ENCODE measurements at regions of chr9 and their contacts with region 1.

Region 1: GRCh38 chr9:136991993-136992818 is at the start of gene PAXX:
- DNase-seq: peak; percentile 90 to 99 (median 93)
- ATAC-seq: peak; percentile 96
- H3K4me3 ChIP-seq: peak within 1 kb of the TSS; percentile 74
- H3K4me3 Mint-ChIP-seq: peak within 1 kb of the TSS; percentile 76 to 90 (median 86)
- H3K27ac ChIP-seq: peak within 1 kb of the TSS; percentile 81
- H3K27ac Mint-ChIP-seq: peak within 1 kb of the TSS; percentile 48 to 89 (median 88)
- H3K4me1 ChIP-seq: peaks cover 17 to 23% of the 10 kb centered on the region in 2 donors
- H3K4me1 Mint-ChIP-seq: peaks cover 0 to 25% (median 15%) of the 10 kb centered on the region in 7 donors
- H3K27me3 ChIP-seq: no peaks in the 10 kb centered on the region
- H3K27me3 Mint-ChIP-seq: peaks cover 5 to 22% (median 5%) of the 10 kb centered on the region in 5 donors
- total RNA-seq, gene PAXX: 54.8 to 78.2 (median 68.0) TPM

Region 2: DNA sequence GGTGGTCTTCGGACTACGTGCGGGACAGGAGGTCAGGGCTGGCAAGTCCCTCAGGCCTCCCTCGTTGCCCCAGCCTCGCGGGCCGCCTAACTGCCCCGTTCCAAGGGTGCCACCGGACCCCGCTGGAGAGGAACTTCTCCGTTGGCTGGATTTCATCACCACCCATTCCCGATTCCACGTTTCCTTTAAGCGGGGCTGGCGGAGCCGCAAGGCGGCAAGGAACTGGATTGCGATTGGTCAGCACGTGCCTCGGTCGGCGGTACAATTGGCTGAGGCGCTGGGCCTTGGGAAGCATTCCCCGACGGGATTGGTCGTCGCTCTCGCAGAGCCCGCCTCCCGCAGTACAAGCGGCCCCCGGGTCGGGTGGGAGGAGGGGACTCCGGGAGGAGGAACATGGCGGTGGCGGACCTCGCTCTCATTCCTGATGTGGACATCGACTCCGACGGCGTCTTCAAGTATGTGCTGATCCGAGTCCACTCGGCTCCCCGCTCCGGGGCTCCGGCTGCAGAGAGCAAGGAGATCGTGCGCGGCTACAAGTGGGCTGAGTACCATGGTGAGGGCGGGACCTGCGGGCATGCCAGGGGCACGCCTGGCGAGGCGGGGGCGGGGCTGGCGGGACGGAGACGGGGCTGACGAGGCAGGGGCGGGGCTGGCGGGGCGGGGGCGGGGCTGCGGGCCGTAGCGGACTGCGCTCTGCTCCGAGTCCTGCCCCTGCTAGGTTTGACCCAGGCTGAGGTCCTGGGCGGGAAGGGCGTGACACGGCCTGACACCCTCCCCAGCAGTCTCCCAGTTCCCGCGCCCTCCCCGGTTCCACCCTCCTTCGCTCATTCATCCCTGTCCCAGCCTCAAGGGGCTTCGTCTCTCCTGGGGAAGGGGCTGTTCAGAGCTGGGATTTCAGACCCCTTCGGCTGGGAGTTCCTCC is 142.9 kb before region 1 on chr9 and contains the start of gene PHPT1:
- CTCF ChIA-PET with region 1: no interaction called
- POLR2A ChIA-PET with region 1: no interaction called
- intact Hi-C with region 1: loop called (anchors 1 kb)
- DNase-seq: peak; percentile 91 to 98 (median 97)
- ATAC-seq: peak; percentile 96
- H3K4me3 ChIP-seq: peak within 1 kb of the TSS; percentile 99
- H3K4me3 Mint-ChIP-seq: peak within 1 kb of the TSS; percentile 86 to 97 (median 92)
- H3K27ac ChIP-seq: peak within 1 kb of the TSS; percentile 71
- H3K27ac Mint-ChIP-seq: peak within 1 kb of the TSS; percentile 40 to 94 (median 88)
- H3K4me1 ChIP-seq: peaks cover 15 to 17% of the 10 kb centered on the region in 2 donors
- H3K4me1 Mint-ChIP-seq: peaks cover 0 to 16% (median 10%) of the 10 kb centered on the region in 7 donors
- H3K27me3 ChIP-seq: no peaks in the 10 kb centered on the region
- H3K27me3 Mint-ChIP-seq: peaks cover 0 to 21% (median 0%) of the 10 kb centered on the region in 5 donors
- total RNA-seq, gene PHPT1: 17.7 to 167 (median 27.7) TPM

Region 3: DNA sequence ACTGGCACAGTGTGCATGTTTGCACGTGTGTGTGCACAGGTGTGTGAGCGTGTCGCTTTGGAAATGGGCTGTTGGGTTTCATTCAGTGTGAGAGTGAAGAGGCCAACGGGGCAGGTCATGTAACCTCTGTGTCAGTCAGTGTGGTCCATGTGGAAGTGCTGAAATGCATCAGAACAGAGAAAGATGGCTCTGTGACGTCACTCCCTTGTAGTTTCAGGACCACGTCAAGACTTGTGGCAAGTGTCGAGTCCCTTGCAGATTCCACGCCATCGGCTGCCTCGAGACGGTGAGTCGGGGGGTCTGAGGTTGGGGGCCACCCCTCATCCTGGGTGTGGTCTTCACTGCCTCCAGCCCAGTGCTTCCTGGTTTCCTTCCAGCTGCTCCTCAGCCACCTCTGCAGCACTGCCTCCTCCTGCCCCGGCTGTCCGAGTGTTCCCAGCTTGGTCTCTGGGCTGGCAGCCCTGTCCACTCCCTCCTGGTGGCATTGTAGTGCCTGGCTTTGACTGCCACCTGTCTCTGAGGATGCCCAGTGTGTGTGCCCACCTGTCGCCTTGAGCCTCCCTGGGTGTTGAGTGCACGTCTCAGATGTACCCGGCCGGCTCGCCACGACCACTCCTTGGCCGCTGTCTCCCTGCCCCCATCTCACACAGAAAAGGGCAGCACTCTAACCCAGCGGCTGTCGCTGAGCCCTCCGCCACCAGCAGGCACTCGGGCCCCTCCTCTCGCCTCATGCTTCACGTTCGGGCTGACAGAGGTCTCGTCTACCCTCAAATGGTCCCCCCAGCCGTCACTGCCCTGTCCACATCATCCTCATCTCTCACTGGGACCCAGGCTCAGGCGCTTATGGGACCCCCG is 75.6 kb before region 1 on chr9:
- CTCF ChIA-PET with region 1: no interaction called
- POLR2A ChIA-PET with region 1: no interaction called
- intact Hi-C with region 1: no loop called
- DNase-seq: no peak
- ATAC-seq: no peak
- H3K4me3 ChIP-seq: no peak overlapping the region
- H3K4me3 Mint-ChIP-seq: no peak overlapping the region
- H3K27ac ChIP-seq: no peak overlapping the region
- H3K27ac Mint-ChIP-seq: peak overlapping the region in 1 of 9 donors; percentile 63
- H3K4me1 ChIP-seq: no peaks in the 10 kb centered on the region
- H3K4me1 Mint-ChIP-seq: peaks cover 0 to 10% (median 4%) of the 10 kb centered on the region in 7 donors
- H3K27me3 ChIP-seq: no peaks in the 10 kb centered on the region
- H3K27me3 Mint-ChIP-seq: no peaks in the 10 kb centered on the region

Region 4: DNA sequence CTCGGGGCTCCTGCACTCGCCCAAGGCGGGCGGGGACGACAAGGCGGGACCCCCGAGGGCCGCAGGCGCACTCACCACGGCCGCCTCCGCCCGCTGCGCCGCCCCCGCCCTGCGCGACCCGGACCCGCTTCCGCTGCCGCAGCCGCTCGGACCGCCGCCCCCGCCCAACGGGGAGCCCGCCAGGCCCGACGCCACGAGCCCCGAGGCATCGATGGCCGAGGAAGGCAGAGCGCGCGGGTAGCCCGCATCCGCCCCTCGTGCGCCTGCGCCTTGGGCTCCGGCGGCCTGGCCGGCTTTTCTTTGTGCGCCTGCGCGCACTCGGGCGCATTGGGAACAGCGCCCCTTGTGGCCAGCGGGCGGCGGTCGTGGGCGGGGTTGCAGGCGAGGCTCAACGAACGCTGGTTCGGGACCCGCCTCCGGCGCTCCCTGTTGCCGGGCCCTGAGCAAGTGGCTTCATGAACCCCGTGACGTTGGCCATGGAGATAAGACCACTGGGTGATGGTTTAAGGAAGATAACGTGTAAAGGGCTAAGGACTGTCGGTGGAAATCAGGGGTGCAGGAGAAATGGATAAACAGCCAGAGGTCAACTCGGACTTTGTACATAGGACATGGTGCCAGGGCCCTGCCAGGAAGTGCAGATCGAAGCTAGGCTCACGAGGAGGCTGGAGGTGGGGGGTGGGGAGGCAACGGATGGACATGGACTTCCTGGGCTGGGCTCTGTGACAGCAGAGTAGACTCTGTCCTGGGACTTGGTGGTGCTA is 47.5 kb before region 1 on chr9 and contains the starts of genes C8G and FBXW5:
- CTCF ChIA-PET with region 1: no interaction called
- POLR2A ChIA-PET with region 1: interaction called, 5 read pairs
- intact Hi-C with region 1: loop called in 1 of 2 experiments (anchors 1 kb)
- DNase-seq: peak; percentile 88 to 99 (median 96)
- ATAC-seq: peak; percentile 92
- H3K4me3 ChIP-seq: peak within 1 kb of the TSS; percentile 72
- H3K4me3 Mint-ChIP-seq: peak within 1 kb of the TSS; percentile 71 to 85 (median 81)
- H3K27ac ChIP-seq: peak within 1 kb of the TSS; percentile 77
- H3K27ac Mint-ChIP-seq: peak within 1 kb of the TSS in 8 of 9 donors; percentile 63 to 90 (median 79)
- H3K4me1 ChIP-seq: peaks cover 10 to 11% of the 10 kb centered on the region in 2 donors
- H3K4me1 Mint-ChIP-seq: peaks cover 0 to 14% (median 5%) of the 10 kb centered on the region in 7 donors
- H3K27me3 ChIP-seq: no peaks in the 10 kb centered on the region
- H3K27me3 Mint-ChIP-seq: no peaks in the 10 kb centered on the region
- total RNA-seq, gene C8G: 0.77 to 3.6 (median 1.4) TPM
- total RNA-seq, gene FBXW5: 54.3 to 105 (median 94.5) TPM

Region 5: DNA sequence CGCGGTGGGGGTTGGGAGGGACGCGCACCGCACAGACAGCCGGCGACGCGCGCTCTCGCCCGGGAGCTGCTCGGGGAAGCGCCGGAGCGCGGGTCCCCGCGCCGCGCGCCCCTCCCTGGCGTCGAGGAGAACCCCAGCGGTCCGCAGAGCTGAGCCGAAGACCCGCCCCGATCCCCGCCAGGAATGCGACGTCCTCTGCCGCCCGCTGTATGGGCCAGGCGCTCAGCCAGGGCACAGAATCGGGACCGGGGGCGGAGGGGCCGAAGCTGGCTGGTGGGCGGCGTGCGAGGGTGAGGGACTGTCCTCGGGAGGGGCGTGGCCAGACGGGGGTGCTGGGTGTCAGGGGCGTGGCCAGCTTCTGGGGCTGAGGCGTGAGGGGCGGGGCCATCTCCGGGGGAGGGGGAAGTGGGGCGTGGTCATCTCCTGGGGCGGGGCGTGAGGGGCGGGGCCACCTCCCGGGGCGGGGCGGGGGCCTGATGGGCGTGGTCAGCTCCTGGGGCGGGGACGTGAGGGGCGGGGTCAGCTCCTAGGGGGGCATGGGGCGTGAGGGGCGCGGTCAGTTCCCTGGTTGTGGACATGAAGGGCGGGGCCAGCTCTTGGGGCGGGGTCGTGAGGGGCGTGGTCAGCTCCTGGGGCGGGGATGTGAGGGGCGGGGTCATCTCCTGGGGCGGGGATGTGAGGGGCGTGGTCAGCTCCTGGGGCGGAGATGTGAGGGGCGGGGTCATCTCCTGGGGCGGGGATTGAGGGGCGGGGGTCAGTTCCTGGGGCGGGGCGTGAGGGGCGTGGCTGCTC is 13.9 kb before region 1 on chr9:
- CTCF ChIA-PET with region 1: interaction called, 3 read pairs
- POLR2A ChIA-PET with region 1: interaction called, 6 read pairs
- intact Hi-C with region 1: loop called (anchors 1 kb)
- DNase-seq: peak; percentile 40 to 82 (median 51)
- ATAC-seq: peak; percentile 87
- H3K4me3 ChIP-seq: no peak overlapping the region
- H3K4me3 Mint-ChIP-seq: peak overlapping the region in 3 of 10 donors; percentile 12 to 37 (median 23)
- H3K27ac ChIP-seq: no peak overlapping the region
- H3K27ac Mint-ChIP-seq: no peak overlapping the region
- H3K4me1 ChIP-seq: peaks cover 13 to 23% of the 10 kb centered on the region in 2 donors
- H3K4me1 Mint-ChIP-seq: peaks cover 0 to 19% (median 7%) of the 10 kb centered on the region in 7 donors
- H3K27me3 ChIP-seq: peaks cover 0 to under 1% of the 10 kb centered on the region in 2 donors
- H3K27me3 Mint-ChIP-seq: peaks cover 0 to 9% (median 3%) of the 10 kb centered on the region in 5 donors

Region 6: GRCh38 chr9:137029058-137029936 is 37.1 kb after region 1 on chr9:
- CTCF ChIA-PET with region 1: interaction called, 8 read pairs
- POLR2A ChIA-PET with region 1: interaction called, 3 read pairs
- intact Hi-C with region 1: loop called in 1 of 2 experiments (anchors 1 kb)
- DNase-seq: peak; percentile 29 to 84 (median 52)
- ATAC-seq: peak; percentile 66
- H3K4me3 ChIP-seq: peak overlapping the region; percentile 69
- H3K4me3 Mint-ChIP-seq: peak overlapping the region; percentile 71 to 85 (median 79)
- H3K27ac ChIP-seq: peak overlapping the region; percentile 51
- H3K27ac Mint-ChIP-seq: peak overlapping the region in 2 of 9 donors; percentile 28 to 52
- H3K4me1 ChIP-seq: peaks cover 50 to 56% of the 10 kb centered on the region in 2 donors
- H3K4me1 Mint-ChIP-seq: peaks cover 13 to 40% (median 32%) of the 10 kb centered on the region in 7 donors
- H3K27me3 ChIP-seq: no peaks in the 10 kb centered on the region
- H3K27me3 Mint-ChIP-seq: peaks cover 0 to 11% (median 0%) of the 10 kb centered on the region in 5 donors

Region 7: DNA sequence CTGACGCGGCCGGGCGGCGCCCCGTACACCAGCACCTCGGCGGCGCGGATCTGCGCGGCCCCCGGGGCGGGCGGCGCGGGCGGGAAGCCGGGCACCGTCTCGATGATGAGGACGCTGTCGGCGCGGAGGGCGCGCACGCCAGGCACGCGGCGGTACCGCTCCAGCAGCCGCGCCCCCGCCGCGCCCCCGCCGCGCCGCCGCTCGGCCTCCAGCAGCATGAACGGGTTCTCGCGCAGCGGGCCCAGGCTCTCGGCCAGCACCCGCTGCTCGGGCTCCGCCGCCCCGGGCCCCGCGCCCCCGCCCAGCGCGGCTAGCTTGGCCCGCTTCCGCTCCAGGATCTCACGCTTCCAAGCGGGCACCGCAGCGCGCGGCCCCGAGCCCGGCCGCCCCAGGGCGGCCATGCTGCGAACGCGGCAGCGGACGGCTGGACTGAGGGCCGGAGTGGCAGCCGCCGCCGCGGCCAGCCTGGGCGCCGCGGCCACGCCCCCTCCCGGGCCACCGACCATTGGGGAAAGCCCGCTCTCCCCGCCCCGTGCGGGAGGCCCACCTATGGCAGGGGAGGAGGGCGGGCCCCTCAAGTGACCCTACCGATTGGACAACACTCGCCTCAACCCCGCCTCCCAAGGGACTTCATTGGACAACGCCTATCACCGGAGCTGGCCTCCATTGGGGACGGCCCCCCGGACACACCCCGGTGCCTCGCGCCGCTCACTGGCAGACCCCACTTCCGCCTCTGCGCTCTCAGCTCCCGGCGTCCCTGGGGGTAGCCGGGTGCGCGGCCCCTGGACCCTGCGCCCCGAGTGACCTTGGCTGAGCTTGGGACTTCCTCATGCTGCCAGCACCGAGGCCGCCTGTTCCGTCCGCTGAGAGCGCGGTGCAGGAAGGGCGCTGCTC is 208.4 kb after region 1 on chr9 and contains the start of gene TPRN:
- CTCF ChIA-PET with region 1: no interaction called
- POLR2A ChIA-PET with region 1: interaction called, 3 read pairs
- intact Hi-C with region 1: loop called in 1 of 2 experiments (anchors 2 kb)
- DNase-seq: peak; percentile 89 to 98 (median 97)
- ATAC-seq: peak; percentile 98
- H3K4me3 ChIP-seq: peak within 1 kb of the TSS; percentile 75
- H3K4me3 Mint-ChIP-seq: peak within 1 kb of the TSS; percentile 77 to 89 (median 84)
- H3K27ac ChIP-seq: peak within 1 kb of the TSS; percentile 78
- H3K27ac Mint-ChIP-seq: peak within 1 kb of the TSS; percentile 12 to 91 (median 78)
- H3K4me1 ChIP-seq: peaks cover 20 to 23% of the 10 kb centered on the region in 2 donors
- H3K4me1 Mint-ChIP-seq: peaks cover 16 to 34% (median 23%) of the 10 kb centered on the region in 7 donors
- H3K27me3 ChIP-seq: no peaks in the 10 kb centered on the region
- H3K27me3 Mint-ChIP-seq: no peaks in the 10 kb centered on the region
- total RNA-seq, gene TPRN: 7.1 to 13.5 (median 8.5) TPM

Measured in naive thymus-derived CD4-positive, alpha-beta T cell (primary cell).